Activated CD8-positive, alpha-beta T cell treated with anti-CD3 and anti-CD28 coated beads for 36 hours (primary cell): ENCODE measurements at regions of chr11 and their contacts with region 1.

Region 1: DNA sequence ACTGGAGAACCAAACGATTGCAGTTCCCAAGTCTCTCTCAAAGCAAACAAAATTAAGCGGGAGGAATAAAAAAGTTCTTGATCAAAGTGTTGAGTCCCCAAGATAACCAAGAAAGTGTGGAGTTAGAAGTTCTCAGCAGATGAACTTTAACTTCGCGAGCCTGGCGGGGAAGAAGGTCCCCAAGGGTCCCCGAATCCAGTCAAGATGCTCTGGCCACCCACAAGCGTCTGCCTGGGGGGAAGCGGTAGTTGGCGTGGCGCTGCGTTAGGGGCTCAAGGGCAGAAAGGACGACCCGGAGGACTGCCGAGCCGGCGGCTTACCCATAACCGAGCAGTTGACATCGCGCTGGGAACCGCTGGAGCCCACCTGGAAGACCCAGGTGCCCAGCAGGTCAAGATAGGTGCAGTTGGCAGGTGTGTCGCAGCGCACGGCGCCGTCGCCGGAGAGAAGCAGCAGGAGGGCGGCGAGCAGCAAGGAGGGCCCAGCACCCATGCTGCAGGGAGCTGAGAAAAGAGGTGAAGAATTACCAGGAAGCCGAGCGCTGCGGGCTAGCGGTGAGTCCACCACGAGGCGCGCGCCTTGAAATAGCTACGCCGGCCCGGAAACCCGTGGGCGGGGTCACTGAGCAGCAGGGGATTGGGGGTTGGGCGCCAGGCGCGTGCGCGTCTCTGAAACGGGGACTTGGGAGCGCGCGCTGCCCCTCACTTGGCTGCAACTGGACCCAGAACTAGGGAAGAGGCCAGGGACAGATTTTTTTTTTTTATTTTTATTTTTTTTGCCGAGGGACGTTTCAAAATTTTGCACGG is at the start of gene CTSC:
- DNase-seq: peak; percentile 99
- ATAC-seq: peak; percentile 78
- H3K4me3 Mint-ChIP-seq: peak within 1 kb of the TSS; percentile 86
- H3K27ac Mint-ChIP-seq: peak within 1 kb of the TSS; percentile 97
- H3K4me1 Mint-ChIP-seq: peaks cover 55% of the 10 kb centered on the region
- H3K27me3 Mint-ChIP-seq: no peaks in the 10 kb centered on the region
- CTCF ChIP-seq: no peak
- total RNA-seq, gene CTSC: 59.8 to 70.0 TPM

Region 2: GRCh38 chr11:88174709-88175568 is 162.4 kb before region 1 on chr11 and contains the start of gene RAB38:
- CTCF ChIA-PET with region 1: no interaction called
- POLR2A ChIA-PET with region 1: interaction called, 3 read pairs
- intact Hi-C with region 1: loop called (anchors 10 kb)
- DNase-seq: peak; percentile 76
- ATAC-seq: peak; percentile 59
- H3K4me3 Mint-ChIP-seq: peak within 1 kb of the TSS; percentile 72
- H3K27ac Mint-ChIP-seq: peak within 1 kb of the TSS; percentile 79
- H3K4me1 Mint-ChIP-seq: peaks cover 41% of the 10 kb centered on the region
- H3K27me3 Mint-ChIP-seq: peaks cover 8% of the 10 kb centered on the region
- CTCF ChIP-seq: no peak
- total RNA-seq, gene RAB38: 3.2 to 3.4 TPM

Region 3: GRCh38 chr11:88206746-88207145 is 130.6 kb before region 1 on chr11:
- CTCF ChIA-PET with region 1: no interaction called
- POLR2A ChIA-PET with region 1: no interaction called
- intact Hi-C with region 1: no loop called
- DNase-seq: no peak
- ATAC-seq: no peak
- H3K4me3 Mint-ChIP-seq: no peak overlapping the region
- H3K27ac Mint-ChIP-seq: no peak overlapping the region
- H3K4me1 Mint-ChIP-seq: no peaks in the 10 kb centered on the region
- H3K27me3 Mint-ChIP-seq: no peaks in the 10 kb centered on the region
- CTCF ChIP-seq: no peak

Region 4: DNA sequence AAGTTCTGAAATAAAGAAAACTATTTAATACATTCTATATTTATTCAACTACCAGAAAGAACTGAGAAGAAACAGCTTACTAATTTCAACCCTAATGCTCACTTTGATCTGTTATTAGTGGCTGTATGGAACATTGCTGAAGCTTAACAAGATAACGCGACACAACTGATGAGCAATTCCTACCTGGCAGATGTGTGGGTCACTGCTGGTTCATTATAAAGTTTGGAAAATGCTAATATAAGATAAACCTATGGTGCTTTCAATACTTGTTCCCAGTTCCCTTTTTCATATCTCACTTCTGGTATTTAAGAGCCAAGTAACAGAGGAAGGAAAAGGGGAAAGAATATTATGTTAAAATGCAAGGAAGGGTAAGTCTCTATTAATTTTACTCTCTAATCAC is 10.3 kb before region 1 on chr11:
- CTCF ChIA-PET with region 1: no interaction called
- POLR2A ChIA-PET with region 1: interaction called, 23 read pairs
- intact Hi-C with region 1: no loop called
- DNase-seq: no peak
- ATAC-seq: no peak
- H3K4me3 Mint-ChIP-seq: no peak overlapping the region
- H3K27ac Mint-ChIP-seq: peak overlapping the region; percentile 47
- H3K4me1 Mint-ChIP-seq: peaks cover 77% of the 10 kb centered on the region
- H3K27me3 Mint-ChIP-seq: no peaks in the 10 kb centered on the region
- CTCF ChIP-seq: no peak

Region 5: GRCh38 chr11:88357323-88358039 is 20.1 kb after region 1 on chr11:
- CTCF ChIA-PET with region 1: interaction called, 10 read pairs
- POLR2A ChIA-PET with region 1: interaction called, 21 read pairs
- intact Hi-C with region 1: loop called (anchors 1 kb)
- DNase-seq: no peak
- ATAC-seq: peak; percentile 72
- H3K4me3 Mint-ChIP-seq: peak overlapping the region; percentile 35
- H3K27ac Mint-ChIP-seq: peak overlapping the region; percentile 87
- H3K4me1 Mint-ChIP-seq: peaks cover 54% of the 10 kb centered on the region
- H3K27me3 Mint-ChIP-seq: no peaks in the 10 kb centered on the region
- CTCF ChIP-seq: no peak

Region 6: GRCh38 chr11:88414385-88414861 is 77.0 kb after region 1 on chr11:
- CTCF ChIA-PET with region 1: interaction called, 5 read pairs
- POLR2A ChIA-PET with region 1: interaction called, 6 read pairs
- intact Hi-C with region 1: loop called (anchors 2 kb)
- DNase-seq: peak; percentile 35
- ATAC-seq: peak; percentile 57
- H3K4me3 Mint-ChIP-seq: peak overlapping the region; percentile 33
- H3K27ac Mint-ChIP-seq: no peak overlapping the region
- H3K4me1 Mint-ChIP-seq: peaks cover 26% of the 10 kb centered on the region
- H3K27me3 Mint-ChIP-seq: no peaks in the 10 kb centered on the region
- CTCF ChIP-seq: no peak

Region 7: DNA sequence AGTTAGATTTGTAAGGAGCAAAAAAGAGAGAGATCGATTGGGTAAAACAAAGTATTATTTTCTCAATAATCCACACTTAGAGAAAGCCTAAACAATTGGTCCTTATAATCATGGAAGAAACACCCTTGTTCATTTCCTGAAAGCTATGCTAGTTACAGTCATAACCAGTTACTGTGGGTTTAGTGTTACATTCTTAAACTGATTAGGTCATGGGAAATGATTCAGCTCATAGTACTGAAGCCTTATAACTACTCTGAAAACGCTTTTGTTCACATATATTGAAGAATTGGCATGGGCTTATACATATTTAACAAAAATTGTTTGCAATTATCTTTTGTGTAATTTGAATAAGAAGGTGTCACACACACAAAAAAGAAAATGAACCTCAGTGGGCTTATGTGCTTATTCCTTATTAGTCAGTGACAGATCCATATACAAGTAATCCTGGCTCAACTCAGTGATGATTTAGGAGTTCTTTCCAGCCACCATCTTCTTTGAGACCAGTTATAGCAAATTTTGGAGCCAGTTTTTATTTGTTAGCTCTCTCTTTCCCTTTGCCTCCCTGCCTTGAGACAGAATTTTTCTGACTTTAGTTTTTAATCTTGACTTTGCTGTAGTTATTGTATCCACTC is 198.6 kb after region 1 on chr11:
- CTCF ChIA-PET with region 1: interaction called, 4 read pairs
- POLR2A ChIA-PET with region 1: no interaction called
- intact Hi-C with region 1: loop called (anchors 10 kb)
- DNase-seq: no peak
- ATAC-seq: peak; percentile 96
- H3K4me3 Mint-ChIP-seq: no peak overlapping the region
- H3K27ac Mint-ChIP-seq: no peak overlapping the region
- H3K4me1 Mint-ChIP-seq: peaks cover 4% of the 10 kb centered on the region
- H3K27me3 Mint-ChIP-seq: peaks cover 3% of the 10 kb centered on the region
- CTCF ChIP-seq: no peak